ENCODE measurements at regions of chr2 and their contacts with region 1.

Region 1: DNA sequence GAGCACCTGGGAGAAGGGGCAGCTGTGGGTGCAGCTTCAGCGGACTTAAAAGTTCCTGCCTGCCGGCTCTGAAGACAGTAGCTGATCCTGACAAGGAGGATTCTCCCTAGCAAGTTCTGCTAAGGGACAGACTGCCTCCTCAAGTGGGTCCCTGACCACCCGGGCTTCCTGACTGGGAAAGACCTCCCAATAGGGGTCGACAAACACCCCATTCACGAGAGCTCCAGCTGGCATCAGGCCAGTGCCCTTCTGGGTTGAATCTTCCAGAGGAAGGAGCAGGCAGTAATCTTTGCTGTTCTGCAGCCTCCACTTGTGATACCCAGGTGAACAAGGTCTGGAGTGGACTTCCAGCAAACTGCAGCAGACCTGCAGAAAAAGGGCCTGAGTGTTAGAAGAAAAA is 632.9 kb downstream of the CCDC85A start:
- DNase-seq: no peak
- ATAC-seq: no peak
- H3K4me3 ChIP-seq: no peak overlapping the region
- H3K4me3 Mint-ChIP-seq: no peak overlapping the region
- H3K27ac ChIP-seq: no peak overlapping the region
- H3K27ac Mint-ChIP-seq: no peak overlapping the region
- H3K4me1 ChIP-seq: no peaks in the 10 kb centered on the region
- H3K4me1 Mint-ChIP-seq: no peaks in the 10 kb centered on the region
- H3K27me3 ChIP-seq: no peaks in the 10 kb centered on the region
- H3K27me3 Mint-ChIP-seq: no peaks in the 10 kb centered on the region
- CTCF ChIP-seq: no peak

Region 2: DNA sequence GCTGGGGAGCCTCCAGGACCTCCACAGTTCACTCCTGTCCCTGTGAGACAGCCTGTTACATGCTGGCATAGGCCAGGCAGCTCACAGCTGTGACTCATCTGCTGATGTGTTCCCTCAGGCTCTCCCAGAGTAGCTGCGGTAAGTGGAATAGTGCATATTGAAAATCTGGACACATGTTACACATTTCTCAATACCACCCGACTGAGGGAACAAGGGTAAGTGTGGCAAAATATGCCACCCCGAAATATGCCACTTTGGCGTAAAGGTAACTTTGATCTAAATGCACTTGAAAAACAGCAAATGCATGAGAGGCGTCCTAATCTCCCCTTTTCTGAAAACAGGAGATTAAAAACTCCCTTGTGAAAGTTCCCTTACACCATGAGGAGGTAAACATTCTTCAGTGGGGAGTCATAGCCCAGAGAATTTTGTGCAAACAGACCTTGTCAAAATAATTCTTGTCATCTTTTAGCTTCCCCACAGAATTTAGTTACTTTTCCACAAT is 75.0 kb before region 1 on chr2:
- CTCF ChIA-PET with region 1: no interaction called
- POLR2A ChIA-PET with region 1: no interaction called
- intact Hi-C with region 1: loop called in 1 of 2 experiments (anchors 2 kb)
- DNase-seq: no peak
- ATAC-seq: no peak
- H3K4me3 ChIP-seq: no peak overlapping the region
- H3K4me3 Mint-ChIP-seq: no peak overlapping the region
- H3K27ac ChIP-seq: no peak overlapping the region
- H3K27ac Mint-ChIP-seq: no peak overlapping the region
- H3K4me1 ChIP-seq: no peaks in the 10 kb centered on the region
- H3K4me1 Mint-ChIP-seq: no peaks in the 10 kb centered on the region
- H3K27me3 ChIP-seq: no peaks in the 10 kb centered on the region
- H3K27me3 Mint-ChIP-seq: no peaks in the 10 kb centered on the region
- CTCF ChIP-seq: no peak

Measured in CD4-positive, alpha-beta T cell (primary cell).